ENCODE measurements at regions of chr7 and their contacts with region 1.

Region 1: DNA sequence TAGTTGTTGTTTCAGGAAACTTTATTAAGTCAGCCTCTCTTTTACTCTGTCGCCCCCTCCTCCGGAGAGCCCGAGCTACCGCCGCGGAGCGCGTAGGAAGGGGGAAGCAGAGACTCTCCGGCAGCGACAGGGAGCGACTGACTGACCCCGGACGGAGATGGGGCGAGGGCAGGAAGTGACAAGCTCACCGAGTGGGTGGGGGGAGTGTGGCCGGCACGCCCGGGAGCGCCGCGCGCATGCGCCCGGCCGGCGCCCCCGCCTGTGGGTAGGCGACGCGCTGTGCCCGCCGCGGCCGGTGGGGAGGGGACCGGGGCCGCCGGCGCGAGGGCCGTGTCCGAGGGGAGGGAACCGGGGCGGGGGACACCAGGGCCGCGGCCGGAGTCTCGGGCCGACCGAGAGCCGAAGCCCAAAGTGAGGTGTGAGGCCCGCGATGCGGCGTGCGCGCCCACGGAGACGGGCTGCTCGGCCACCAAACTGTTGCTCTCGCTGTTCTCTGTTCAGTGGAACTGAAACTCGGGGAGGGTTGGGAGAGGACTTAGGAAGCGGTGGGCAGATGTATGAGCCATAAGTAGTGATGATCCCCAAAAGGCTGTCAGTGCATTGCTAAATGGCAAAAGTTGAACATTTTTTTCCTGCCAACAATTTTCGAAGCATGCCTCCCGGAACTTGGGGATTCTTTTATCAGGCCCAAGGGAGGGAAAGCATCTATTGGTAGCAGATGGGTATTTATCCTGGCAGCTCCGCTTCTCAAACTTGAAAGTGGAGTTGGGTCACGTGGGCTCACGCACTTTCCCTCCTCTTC is at the start of gene ZNF800:
- DNase-seq: peak; percentile 97
- CTCF ChIP-seq: no peak

Region 2: DNA sequence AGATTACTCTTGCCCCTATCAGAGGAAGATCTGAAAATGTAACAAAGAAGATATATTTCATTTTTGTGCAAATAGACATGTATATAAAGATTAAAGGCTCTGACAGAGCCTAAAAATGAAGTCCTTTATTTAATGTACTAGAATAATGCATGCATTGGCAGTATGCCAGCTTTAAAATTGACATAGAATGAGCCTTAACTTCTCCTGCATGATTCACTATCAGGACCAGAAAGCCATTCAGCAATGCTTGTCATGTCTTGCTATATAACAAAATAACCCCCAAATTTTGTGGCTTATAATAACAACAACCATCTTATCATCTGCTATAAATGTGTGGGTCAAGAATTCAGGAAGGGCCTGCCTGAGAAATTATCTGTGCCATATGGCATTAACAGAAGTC is 551.9 kb before region 1 on chr7:
- CTCF ChIA-PET with region 1: no interaction called
- POLR2A ChIA-PET with region 1: no interaction called
- DNase-seq: no peak
- CTCF ChIP-seq: no peak

Region 3: DNA sequence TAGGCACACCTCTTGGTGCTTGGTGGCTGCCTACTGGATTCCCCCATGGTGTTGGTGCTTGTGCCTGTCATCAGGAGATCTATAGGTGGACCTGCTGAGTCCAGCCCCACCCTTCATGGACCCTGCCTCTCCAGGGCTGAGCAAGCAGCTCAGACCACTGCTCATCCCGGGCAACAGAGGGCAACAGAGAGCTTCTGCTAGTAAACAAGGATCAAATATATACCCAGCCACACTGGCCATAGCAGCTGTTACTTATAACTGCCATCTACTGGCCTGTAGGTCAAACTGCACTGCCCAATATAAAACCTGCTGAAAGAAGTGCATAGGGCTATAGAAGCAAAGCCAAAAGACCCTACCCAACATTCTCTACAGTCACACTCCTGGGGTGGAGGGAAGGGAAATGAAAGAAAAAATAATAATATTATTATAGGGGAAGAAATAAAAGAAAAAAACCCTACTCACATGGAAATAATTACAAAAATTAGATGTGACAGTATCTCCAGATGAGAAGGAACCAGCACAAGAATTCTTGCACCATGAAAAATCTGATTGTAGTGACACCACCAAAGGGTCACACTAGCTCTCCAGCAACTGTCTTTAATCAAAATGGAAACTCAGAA is 54.7 kb after region 1 on chr7:
- CTCF ChIA-PET with region 1: interaction called, 15 read pairs
- POLR2A ChIA-PET with region 1: no interaction called
- DNase-seq: peak; percentile 63
- CTCF ChIP-seq: peak; percentile 91

Region 4: DNA sequence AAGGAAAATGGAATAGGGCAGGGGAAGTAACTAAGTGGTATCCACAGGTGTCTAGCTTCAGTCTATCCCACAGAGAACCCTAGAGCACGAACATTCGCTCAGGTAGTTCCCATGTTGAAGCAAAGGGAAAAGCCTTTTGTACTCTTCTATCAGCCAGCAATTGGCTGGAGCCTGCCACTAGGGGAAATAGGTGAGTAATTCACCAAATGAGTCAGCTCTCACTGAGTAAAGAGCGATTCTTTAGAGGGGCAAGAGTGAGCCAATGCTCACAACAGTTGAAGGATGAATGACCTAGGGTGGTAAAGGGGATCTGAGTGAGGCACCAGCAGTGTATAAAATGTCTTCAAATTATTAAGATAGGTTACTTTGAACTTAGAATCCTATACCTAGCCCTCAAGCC is 93.9 kb after region 1 on chr7:
- CTCF ChIA-PET with region 1: no interaction called
- POLR2A ChIA-PET with region 1: no interaction called
- DNase-seq: no peak
- CTCF ChIP-seq: no peak

Region 5: GRCh38 chr7:127619681-127620405 is 227.1 kb after region 1 on chr7:
- CTCF ChIA-PET with region 1: no interaction called
- POLR2A ChIA-PET with region 1: no interaction called
- DNase-seq: no peak
- CTCF ChIP-seq: no peak

Measured in GM10248 (cell line).